Activated T-helper 1 cell treated with anti-CD3 and anti-CD28 coated beads, Interleukin-12 subunit alpha, Interleukin-12 subunit beta, Interleukin-2, Interleukin-4 antibody, amounts not matched to agents 30 ng/mL and 10 ng/mL and 1 ng/mL, durations not matched to agents 14 hours and 24 hours and 36 hours (primary cell): ENCODE measurements at regions of chr3 and their contacts with region 1.

Region 1: DNA sequence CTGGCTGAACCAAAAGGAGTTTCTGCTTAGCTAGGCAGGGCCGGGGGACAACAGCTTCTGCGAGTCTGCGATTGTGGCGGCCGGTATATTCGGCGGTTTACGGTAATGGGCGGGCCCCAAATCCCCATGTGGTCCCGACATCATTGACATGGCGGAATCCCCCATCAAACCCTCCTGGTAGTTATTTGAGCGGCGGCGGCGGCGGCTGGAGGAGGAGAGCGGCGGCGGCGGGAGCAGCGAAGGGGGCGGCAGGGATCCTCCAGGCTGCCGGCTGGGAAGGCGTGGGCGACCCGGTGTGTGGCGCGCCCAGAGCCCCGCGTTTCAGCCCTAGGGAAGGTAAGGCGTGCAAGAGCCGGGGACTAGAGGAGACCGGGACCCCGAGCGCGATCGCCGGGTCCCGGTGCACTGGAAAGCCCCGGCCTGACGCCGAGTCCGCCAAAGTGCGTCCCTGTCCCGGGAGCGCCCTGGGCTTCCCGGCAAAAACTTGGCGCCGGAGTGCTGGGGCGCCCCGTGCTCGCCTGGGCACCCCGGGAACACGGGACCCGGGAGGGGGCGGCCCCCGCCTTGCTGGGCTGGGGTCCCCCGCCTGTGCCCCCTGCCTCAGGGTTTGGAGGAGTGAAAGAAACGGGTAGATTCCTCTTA is at the start of gene FNDC3B:
- DNase-seq: peak; percentile 89
- H3K4me3 Mint-ChIP-seq: peak within 1 kb of the TSS; percentile 99
- H3K27ac Mint-ChIP-seq: peak within 1 kb of the TSS; percentile 99
- H3K4me1 Mint-ChIP-seq: peaks cover 31% of the 10 kb centered on the region
- H3K27me3 Mint-ChIP-seq: peaks cover 13% of the 10 kb centered on the region
- total RNA-seq, gene FNDC3B: 29.0 and 31.5 TPM in 2 replicates

Region 2: GRCh38 chr3:171809821-171810628 is 229.5 kb before region 1 on chr3 and contains the start of gene PLD1:
- intact Hi-C with region 1: loop called (anchors 10 kb)
- DNase-seq: peak; percentile 27
- H3K4me3 Mint-ChIP-seq: peak within 1 kb of the TSS; percentile 83
- H3K27ac Mint-ChIP-seq: no peak within 1 kb of the TSS
- H3K4me1 Mint-ChIP-seq: peaks cover 22% of the 10 kb centered on the region
- H3K27me3 Mint-ChIP-seq: peaks cover 53% of the 10 kb centered on the region
- total RNA-seq, gene PLD1: 0.15 and 0.29 TPM in 2 replicates

Region 3: GRCh38 chr3:171980578-171981270 is 58.8 kb before region 1 on chr3:
- intact Hi-C with region 1: no loop called
- DNase-seq: no peak
- H3K4me3 Mint-ChIP-seq: no peak overlapping the region
- H3K27ac Mint-ChIP-seq: no peak overlapping the region
- H3K4me1 Mint-ChIP-seq: no peaks in the 10 kb centered on the region
- H3K27me3 Mint-ChIP-seq: no peaks in the 10 kb centered on the region

Region 4: GRCh38 chr3:172057059-172057458 is 17.5 kb after region 1 on chr3:
- intact Hi-C with region 1: loop called (anchors 2 kb)
- DNase-seq: no peak
- H3K4me3 Mint-ChIP-seq: no peak overlapping the region
- H3K27ac Mint-ChIP-seq: no peak overlapping the region
- H3K4me1 Mint-ChIP-seq: peaks cover 44% of the 10 kb centered on the region
- H3K27me3 Mint-ChIP-seq: no peaks in the 10 kb centered on the region

Region 5: DNA sequence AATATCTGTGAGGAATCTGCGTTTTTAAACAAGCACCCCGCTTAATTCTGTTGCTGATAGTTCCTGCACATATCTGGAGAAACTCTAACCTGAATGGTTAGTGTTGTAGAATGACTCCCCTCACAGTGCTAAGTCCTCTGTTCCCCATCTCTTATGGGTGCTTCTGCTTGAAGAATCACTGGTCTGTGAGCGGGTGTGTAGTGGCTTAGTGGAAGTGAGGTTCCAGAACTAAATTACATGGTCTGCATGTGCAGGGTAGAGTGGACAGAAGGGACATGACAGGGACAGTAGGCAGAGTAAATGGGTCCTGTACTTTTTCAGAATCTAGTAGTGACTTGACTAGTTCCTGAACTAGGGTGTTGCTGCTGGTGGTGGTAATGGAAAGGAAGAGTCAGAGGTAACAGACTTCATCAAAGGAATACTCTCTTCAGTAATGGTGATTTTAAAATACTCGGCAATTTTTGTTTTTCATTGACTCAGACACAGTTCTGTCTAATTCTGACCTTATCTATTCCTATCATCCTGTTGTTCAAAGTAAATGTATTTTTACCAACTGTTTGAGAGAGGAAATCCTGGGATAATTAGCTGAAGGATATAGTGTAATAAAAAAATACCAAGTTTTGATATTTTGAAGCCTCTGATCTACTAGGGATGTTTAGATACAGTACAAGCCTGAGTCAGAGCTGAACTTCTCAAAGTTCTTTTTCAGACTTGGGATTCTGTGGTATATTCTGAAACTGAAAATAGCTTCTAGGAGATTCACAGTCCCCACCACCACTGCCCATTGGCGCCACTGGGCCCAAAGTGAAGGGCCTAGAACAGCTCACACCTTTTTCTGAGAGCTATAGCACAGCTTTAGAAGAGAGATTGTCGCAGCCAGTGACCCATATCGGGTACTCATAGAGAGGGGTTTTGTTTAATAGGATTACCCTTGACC is 55.3 kb after region 1 on chr3:
- intact Hi-C with region 1: loop called (anchors 2 kb)
- DNase-seq: peak; percentile 25
- H3K4me3 Mint-ChIP-seq: no peak overlapping the region
- H3K27ac Mint-ChIP-seq: peak overlapping the region; percentile 63
- H3K4me1 Mint-ChIP-seq: peaks cover 69% of the 10 kb centered on the region
- H3K27me3 Mint-ChIP-seq: peaks cover 2% of the 10 kb centered on the region

Region 6: DNA sequence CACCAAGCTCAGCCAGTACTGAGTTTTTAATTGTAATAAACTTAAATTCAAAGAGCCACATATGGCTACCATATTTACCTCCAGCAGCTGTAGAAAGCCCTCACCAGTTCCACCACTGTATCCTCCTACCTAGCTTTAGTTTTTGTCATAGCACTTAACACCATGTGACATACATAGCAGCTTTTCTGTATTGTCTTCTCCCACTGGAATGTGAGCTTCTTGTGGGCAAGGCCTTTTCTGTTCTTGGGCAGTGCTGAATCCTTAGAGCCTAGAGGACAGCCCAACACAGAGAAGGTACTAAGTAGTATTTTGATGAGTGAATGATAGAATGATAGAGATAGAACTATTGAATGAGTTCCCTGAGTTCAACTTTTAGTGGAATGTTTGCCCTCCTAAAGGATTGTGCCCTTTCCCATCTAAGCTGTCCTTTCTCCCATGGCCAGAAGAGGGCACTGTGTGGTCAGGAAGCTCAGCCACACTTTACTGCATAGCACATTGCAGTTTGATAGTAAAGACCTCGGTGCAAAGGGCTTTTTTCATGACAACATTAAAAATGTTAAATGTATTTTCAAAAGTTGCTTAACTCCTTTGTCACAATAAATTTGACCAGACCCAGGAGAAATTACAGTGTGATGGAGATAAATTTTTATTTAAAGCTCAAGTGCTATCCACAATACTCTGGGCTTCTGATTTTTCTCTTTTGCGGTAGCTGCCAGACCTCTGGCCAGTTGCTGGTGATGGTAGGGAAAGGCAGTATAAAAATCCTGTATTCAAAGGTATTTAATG is 292.9 kb after region 1 on chr3:
- intact Hi-C with region 1: loop called (anchors 2 kb)
- DNase-seq: peak; percentile 43
- H3K4me3 Mint-ChIP-seq: no peak overlapping the region
- H3K27ac Mint-ChIP-seq: no peak overlapping the region
- H3K4me1 Mint-ChIP-seq: no peaks in the 10 kb centered on the region
- H3K27me3 Mint-ChIP-seq: no peaks in the 10 kb centered on the region

Region 7: DNA sequence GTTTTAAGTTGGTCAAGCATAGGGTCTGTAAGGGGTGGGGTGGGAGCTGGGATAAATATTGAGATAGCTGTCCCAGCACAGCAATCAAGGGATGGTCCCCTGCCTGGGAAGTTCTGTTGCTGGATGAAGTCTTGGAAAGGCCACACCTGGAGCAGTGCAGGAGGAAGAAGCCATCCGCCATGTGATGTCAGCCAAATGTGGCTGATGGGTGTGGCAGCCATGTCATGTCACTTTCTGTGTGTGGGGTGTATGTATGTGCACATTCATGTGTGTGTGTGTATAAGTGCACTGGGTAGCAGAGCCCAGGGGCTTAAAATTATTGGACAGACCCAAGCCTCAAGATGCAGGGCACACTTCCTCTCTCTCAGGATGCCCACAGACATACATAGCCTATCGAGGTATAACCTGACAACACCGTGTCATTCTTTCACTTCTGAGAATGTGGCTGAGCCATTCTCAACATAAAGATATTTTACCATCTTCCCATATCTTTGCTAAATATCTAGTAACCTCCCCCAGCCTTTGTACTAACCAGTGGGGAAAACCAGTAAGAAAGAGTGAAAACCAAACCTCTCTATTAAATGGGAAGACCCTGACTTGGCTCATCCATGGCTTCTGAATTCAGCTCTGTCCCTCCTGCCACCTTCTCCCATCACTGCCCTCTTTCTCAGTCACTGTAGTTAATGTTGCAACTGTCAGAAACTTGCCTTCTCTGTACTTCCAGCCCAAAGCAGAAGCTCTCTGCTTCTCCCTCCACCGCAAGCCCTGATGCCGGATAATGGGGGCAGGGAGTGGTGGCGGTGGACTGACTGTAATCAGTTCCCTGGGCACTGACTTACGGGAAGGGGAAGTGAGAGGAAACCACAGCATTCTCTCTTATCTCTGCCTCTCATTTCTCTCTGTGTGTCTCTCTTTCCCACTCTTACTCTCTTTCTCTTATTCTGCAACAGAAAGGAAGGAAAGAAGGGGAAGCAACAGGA is 472.5 kb after region 1 on chr3:
- intact Hi-C with region 1: loop called (anchors 10 kb)
- DNase-seq: peak; percentile 69
- H3K4me3 Mint-ChIP-seq: peak overlapping the region; percentile 43
- H3K27ac Mint-ChIP-seq: peak overlapping the region; percentile 88
- H3K4me1 Mint-ChIP-seq: peaks cover 98% of the 10 kb centered on the region
- H3K27me3 Mint-ChIP-seq: no peaks in the 10 kb centered on the region

Region 8: GRCh38 chr3:172750368-172751174 is 711.0 kb after region 1 on chr3 and contains the start of gene ECT2:
- intact Hi-C with region 1: loop called (anchors 1 kb)
- DNase-seq: peak; percentile 97
- H3K4me3 Mint-ChIP-seq: peak within 1 kb of the TSS; percentile 94
- H3K27ac Mint-ChIP-seq: peak within 1 kb of the TSS; percentile 97
- H3K4me1 Mint-ChIP-seq: peaks cover 38% of the 10 kb centered on the region
- H3K27me3 Mint-ChIP-seq: peaks cover 4% of the 10 kb centered on the region
- total RNA-seq, gene ECT2: 34.5 and 39.6 TPM in 2 replicates